AG04450 (cell line): ENCODE measurements at regions of chr15 and their contacts with region 1.

Region 1: DNA sequence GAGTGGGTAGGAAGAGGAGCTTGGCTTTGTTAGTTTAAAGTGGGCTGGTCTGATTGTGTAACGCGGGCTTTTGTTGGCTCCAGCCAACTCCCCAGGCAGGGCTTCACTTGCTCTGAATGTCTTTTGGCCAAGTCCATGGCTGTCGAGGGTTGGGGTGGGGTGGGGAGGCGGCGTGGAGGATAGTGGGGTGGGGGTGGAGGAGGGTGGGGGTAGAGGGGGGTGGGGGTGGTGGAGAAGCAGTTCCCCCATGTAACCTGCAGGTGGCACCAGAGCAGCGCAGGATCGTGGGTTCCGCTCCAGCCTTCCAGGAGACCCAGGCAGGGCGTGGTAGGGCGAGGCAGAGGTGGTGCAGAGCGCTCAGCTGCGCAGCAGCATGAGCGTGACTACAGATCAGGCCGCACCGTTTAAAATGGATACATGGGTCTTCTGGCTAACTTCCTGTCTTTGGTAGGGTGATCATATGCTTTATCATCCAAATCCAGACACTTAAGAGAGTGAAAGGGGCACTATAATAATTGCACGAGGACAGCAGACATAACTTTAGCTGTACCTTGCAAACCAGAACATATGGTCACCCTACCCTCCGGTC is 28.3 kb downstream of the GOLGA6A start:
- DNase-seq: peak; percentile 20
- H3K4me3 ChIP-seq: no peak overlapping the region
- H3K27ac ChIP-seq: no peak overlapping the region
- H3K27me3 ChIP-seq: peaks cover 6% of the 10 kb centered on the region
- CTCF ChIP-seq: peak; percentile 67

Region 2: DNA sequence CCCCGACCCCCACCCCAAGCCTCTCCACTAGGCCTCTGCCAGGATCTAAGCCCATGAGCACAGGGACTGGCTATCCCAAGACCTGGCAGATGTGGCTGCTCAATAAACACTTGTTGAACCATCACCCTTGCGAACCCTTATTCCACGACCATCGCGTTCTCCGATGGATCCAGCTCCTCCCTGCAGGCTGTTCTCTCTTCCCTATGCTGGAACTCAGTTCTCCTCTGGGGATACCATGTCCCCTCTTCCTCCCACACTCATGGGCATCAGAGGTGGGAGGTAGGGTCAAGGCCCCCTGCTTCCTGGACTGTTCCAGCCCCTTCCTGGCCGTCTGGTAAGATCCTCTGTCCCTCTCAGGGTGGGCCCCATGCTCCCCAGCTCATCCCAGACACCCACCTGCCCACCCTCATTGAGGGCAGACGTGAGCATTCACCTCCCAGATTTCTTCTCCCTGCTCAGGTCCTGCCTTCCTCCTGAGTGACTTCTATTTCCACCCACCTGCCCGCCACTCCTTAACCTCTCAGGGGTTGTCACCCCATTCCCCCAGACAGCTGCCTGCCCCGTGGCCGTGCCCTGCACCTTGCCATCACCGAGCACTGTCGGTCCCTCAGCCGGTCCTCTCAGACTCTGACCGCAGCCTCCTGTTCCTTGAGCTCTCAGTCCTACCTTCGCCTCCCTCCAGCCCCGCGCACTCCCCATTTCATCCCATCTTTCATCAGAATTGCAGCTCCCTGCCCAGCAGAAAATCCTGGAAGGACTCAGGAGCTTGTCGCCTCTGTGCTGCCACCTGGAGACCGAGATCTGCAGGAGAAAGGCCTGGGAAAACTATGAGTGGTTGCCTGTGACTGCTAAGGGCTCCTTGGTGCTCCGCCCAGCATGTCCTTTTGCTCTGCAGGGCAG is 17.5 kb before region 1 on chr15:
- CTCF ChIA-PET with region 1: interaction called, 77 read pairs
- POLR2A ChIA-PET with region 1: interaction called, 15 read pairs
- DNase-seq: peak; percentile 30
- H3K4me3 ChIP-seq: no peak overlapping the region
- H3K27ac ChIP-seq: no peak overlapping the region
- H3K27me3 ChIP-seq: no peaks in the 10 kb centered on the region
- CTCF ChIP-seq: peak; percentile 72

Region 3: DNA sequence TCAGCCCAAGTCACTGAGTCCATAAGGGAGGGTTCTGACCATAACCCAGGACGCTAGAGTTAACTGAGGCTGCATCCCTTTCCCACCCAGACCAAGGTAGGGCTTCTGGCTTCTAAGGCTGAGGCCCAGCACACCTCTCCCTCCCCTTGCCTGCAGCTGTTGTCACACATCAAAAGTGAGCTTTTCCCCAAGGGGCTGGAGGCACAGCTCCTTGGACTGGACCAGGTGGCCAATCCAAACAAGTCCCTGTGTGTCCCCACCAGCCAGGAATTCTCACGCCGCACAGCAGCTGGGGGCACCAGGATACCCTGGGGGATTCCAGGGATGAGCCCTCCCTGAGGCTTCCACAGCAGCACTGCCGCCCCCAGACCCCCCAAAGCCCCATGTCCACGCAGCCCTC is 54.1 kb after region 1 on chr15:
- CTCF ChIA-PET with region 1: no interaction called
- POLR2A ChIA-PET with region 1: no interaction called
- DNase-seq: no peak
- H3K4me3 ChIP-seq: no peak overlapping the region
- H3K27ac ChIP-seq: no peak overlapping the region
- H3K27me3 ChIP-seq: no peaks in the 10 kb centered on the region
- CTCF ChIP-seq: no peak

Region 4: GRCh38 chr15:74127260-74127953 is 73.4 kb after region 1 on chr15:
- CTCF ChIA-PET with region 1: interaction called, 27 read pairs
- POLR2A ChIA-PET with region 1: no interaction called
- DNase-seq: peak; percentile 55
- H3K4me3 ChIP-seq: peak overlapping the region; percentile 41
- H3K27ac ChIP-seq: no peak overlapping the region
- H3K27me3 ChIP-seq: peaks cover 87% of the 10 kb centered on the region
- CTCF ChIP-seq: peak; percentile 95

Region 5: DNA sequence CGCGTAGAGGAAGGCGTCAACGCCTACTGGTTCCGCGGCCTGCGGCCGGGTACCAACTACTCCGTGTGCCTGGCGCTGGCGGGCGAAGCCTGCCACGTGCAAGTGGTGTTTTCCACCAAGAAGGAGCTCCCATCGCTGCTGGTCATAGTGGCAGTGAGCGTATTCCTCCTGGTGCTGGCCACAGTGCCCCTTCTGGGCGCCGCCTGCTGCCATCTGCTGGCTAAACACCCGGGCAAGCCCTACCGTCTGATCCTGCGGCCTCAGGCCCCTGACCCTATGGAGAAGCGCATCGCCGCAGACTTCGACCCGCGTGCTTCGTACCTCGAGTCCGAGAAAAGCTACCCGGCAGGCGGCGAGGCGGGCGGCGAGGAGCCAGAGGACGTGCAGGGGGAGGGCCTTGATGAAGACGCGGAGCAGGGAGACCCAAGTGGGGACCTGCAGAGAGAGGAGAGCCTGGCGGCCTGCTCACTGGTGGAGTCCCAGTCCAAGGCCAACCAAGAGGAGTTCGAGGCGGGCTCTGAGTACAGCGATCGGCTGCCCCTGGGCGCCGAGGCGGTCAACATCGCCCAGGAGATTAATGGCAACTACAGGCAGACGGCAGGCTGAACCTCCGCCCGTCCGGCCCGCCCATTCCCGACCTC is 80.5 kb after region 1 on chr15:
- CTCF ChIA-PET with region 1: interaction called, 12 read pairs
- POLR2A ChIA-PET with region 1: no interaction called
- DNase-seq: no peak
- H3K4me3 ChIP-seq: no peak overlapping the region
- H3K27ac ChIP-seq: no peak overlapping the region
- H3K27me3 ChIP-seq: peaks cover 91% of the 10 kb centered on the region
- CTCF ChIP-seq: peak; percentile 57

Region 6: GRCh38 chr15:74307827-74308644 is 254.0 kb after region 1 on chr15:
- CTCF ChIA-PET with region 1: interaction called, 28 read pairs
- POLR2A ChIA-PET with region 1: no interaction called
- DNase-seq: no peak
- H3K4me3 ChIP-seq: no peak overlapping the region
- H3K27ac ChIP-seq: no peak overlapping the region
- H3K27me3 ChIP-seq: peaks cover 78% of the 10 kb centered on the region
- CTCF ChIP-seq: peak; percentile 82

Region 7: GRCh38 chr15:74460871-74461846 is 407.1 kb after region 1 on chr15 and contains the start of gene UBL7:
- CTCF ChIA-PET with region 1: no interaction called
- POLR2A ChIA-PET with region 1: no interaction called
- DNase-seq: peak; percentile 83
- H3K4me3 ChIP-seq: peak within 1 kb of the TSS; percentile 79
- H3K27ac ChIP-seq: peak within 1 kb of the TSS; percentile 57
- H3K27me3 ChIP-seq: no peaks in the 10 kb centered on the region
- CTCF ChIP-seq: peak; percentile 39; the same call in 1 of the 2 replicates
- polyA plus RNA-seq, gene UBL7: 76.6 and 82.8 TPM in 2 replicates